ENCODE measurements at regions of chr19 and their contacts with region 1.

Region 1: GRCh38 chr19:30656520-30657100 is 284.4 kb downstream of the ZNF536 start:
- DNase-seq: no peak
- H3K4me3 ChIP-seq: no peak overlapping the region
- H3K27ac ChIP-seq: no peak overlapping the region
- H3K4me1 ChIP-seq: no peaks in the 10 kb centered on the region
- H3K27me3 ChIP-seq: no peaks in the 10 kb centered on the region
- CTCF ChIP-seq: no peak
- EP300 ChIP-seq: no peak
- POLR2A ChIP-seq: no peak

Region 2: GRCh38 chr19:30274987-30275386 is 381.6 kb before region 1 on chr19:
- in situ Hi-C with region 1: no loop called
- intact Hi-C with region 1: no loop called
- DNase-seq: no peak
- H3K4me3 ChIP-seq: no peak overlapping the region
- H3K27ac ChIP-seq: no peak overlapping the region
- H3K4me1 ChIP-seq: no peaks in the 10 kb centered on the region
- H3K27me3 ChIP-seq: no peaks in the 10 kb centered on the region
- CTCF ChIP-seq: no peak
- EP300 ChIP-seq: no peak
- POLR2A ChIP-seq: no peak

Region 3: GRCh38 chr19:30364866-30365800 is 291.5 kb before region 1 on chr19:
- in situ Hi-C with region 1: no loop called
- intact Hi-C with region 1: loop called (anchors 5 kb)
- DNase-seq: no peak
- H3K4me3 ChIP-seq: no peak overlapping the region
- H3K27ac ChIP-seq: no peak overlapping the region
- H3K4me1 ChIP-seq: no peaks in the 10 kb centered on the region
- H3K27me3 ChIP-seq: no peaks in the 10 kb centered on the region
- CTCF ChIP-seq: no peak
- EP300 ChIP-seq: no peak
- POLR2A ChIP-seq: no peak

Region 4: DNA sequence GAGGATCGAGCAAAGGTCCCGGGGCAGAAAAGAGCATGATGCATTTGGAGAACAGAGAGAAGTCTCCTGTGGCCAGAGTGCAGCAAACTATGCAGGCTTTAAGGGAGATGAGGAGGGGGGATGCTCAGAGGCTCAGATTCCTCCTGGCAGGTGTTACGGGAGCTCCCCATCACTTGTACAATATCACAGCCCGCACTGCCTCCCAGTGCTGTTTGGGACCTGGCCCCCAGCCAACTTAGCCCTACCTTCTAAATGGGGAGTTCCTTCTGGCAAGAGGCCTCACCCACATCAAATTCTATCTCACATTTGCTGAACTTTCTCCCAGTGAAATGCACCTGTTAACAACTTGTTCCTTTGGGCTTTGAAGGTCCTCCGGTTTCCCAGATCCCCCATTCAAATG is 46.6 kb after region 1 on chr19:
- in situ Hi-C with region 1: no loop called
- intact Hi-C with region 1: no loop called
- DNase-seq: no peak
- H3K4me3 ChIP-seq: no peak overlapping the region
- H3K27ac ChIP-seq: no peak overlapping the region
- H3K4me1 ChIP-seq: no peaks in the 10 kb centered on the region
- H3K27me3 ChIP-seq: no peaks in the 10 kb centered on the region
- CTCF ChIP-seq: no peak
- EP300 ChIP-seq: no peak
- POLR2A ChIP-seq: no peak

Measured in transverse colon (tissue), 4 donors.